Activated CD8-positive, alpha-beta T cell treated with anti-CD3 and anti-CD28 coated beads, Interleukin-2, amount 10 ng/mL, durations not matched to agents 7 days and 5 days (primary cell): ENCODE measurements at regions of chr12 and their contacts with region 1.

Region 1: GRCh38 chr12:64550755-64551154 is 59.5 kb upstream of the RASSF3 start:
- DNase-seq: no peak
- ATAC-seq: no peak
- H3K4me3 Mint-ChIP-seq: no peak overlapping the region
- H3K27ac Mint-ChIP-seq: no peak overlapping the region
- H3K4me1 Mint-ChIP-seq: peaks cover 6% of the 10 kb centered on the region
- H3K27me3 Mint-ChIP-seq: peaks cover 10% of the 10 kb centered on the region

Region 2: GRCh38 chr12:64538121-64538520 is 12.6 kb before region 1 on chr12:
- CTCF ChIA-PET with region 1: interaction called, 20 read pairs
- POLR2A ChIA-PET with region 1: no interaction called
- DNase-seq: no peak
- ATAC-seq: no peak
- H3K4me3 Mint-ChIP-seq: no peak overlapping the region
- H3K27ac Mint-ChIP-seq: no peak overlapping the region
- H3K4me1 Mint-ChIP-seq: no peaks in the 10 kb centered on the region
- H3K27me3 Mint-ChIP-seq: peaks cover 8% of the 10 kb centered on the region

Region 3: GRCh38 chr12:64669270-64669842 is 118.6 kb after region 1 on chr12:
- CTCF ChIA-PET with region 1: interaction called, 10 read pairs
- POLR2A ChIA-PET with region 1: no interaction called
- DNase-seq: peak; percentile 67
- ATAC-seq: peak; percentile 85
- H3K4me3 Mint-ChIP-seq: peak overlapping the region; percentile 87
- H3K27ac Mint-ChIP-seq: peak overlapping the region; percentile 98
- H3K4me1 Mint-ChIP-seq: peaks cover 91% of the 10 kb centered on the region
- H3K27me3 Mint-ChIP-seq: no peaks in the 10 kb centered on the region

Region 4: GRCh38 chr12:64696080-64696741 is 145.5 kb after region 1 on chr12:
- CTCF ChIA-PET with region 1: interaction called, 113 read pairs
- POLR2A ChIA-PET with region 1: interaction called, 9 read pairs
- DNase-seq: no peak
- ATAC-seq: no peak
- H3K4me3 Mint-ChIP-seq: no peak overlapping the region
- H3K27ac Mint-ChIP-seq: peak overlapping the region; percentile 36
- H3K4me1 Mint-ChIP-seq: peaks cover 64% of the 10 kb centered on the region
- H3K27me3 Mint-ChIP-seq: no peaks in the 10 kb centered on the region

Region 5: DNA sequence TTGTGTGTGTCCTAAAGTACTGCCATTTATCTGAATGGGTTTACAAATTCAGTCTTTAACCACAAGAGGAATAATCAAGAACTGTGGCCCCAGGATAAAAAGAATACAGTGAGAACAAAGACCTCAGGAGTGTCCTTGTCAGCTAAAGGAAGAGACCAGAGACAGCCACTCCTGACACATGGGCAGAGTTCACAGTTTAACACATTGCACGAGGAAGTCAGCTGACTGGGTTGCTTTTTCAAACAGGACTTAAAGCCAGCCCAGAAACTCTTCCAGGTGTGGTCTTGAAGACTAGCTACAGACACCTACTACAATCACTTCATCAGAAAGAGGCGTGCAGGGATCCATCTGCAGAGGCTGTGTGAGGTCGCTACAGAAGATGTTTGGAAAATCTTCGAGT is 165.6 kb after region 1 on chr12:
- CTCF ChIA-PET with region 1: interaction called, 18 read pairs
- POLR2A ChIA-PET with region 1: no interaction called
- DNase-seq: no peak
- ATAC-seq: no peak
- H3K4me3 Mint-ChIP-seq: no peak overlapping the region
- H3K27ac Mint-ChIP-seq: no peak overlapping the region
- H3K4me1 Mint-ChIP-seq: peaks cover 38% of the 10 kb centered on the region
- H3K27me3 Mint-ChIP-seq: no peaks in the 10 kb centered on the region

Region 6: GRCh38 chr12:64767495-64767894 is 216.7 kb after region 1 on chr12:
- CTCF ChIA-PET with region 1: no interaction called
- POLR2A ChIA-PET with region 1: no interaction called
- DNase-seq: no peak
- ATAC-seq: no peak
- H3K4me3 Mint-ChIP-seq: no peak overlapping the region
- H3K27ac Mint-ChIP-seq: no peak overlapping the region
- H3K4me1 Mint-ChIP-seq: no peaks in the 10 kb centered on the region
- H3K27me3 Mint-ChIP-seq: peaks cover 4% of the 10 kb centered on the region

Region 7: GRCh38 chr12:64796208-64796845 is 245.6 kb after region 1 on chr12:
- CTCF ChIA-PET with region 1: interaction called, 13 read pairs
- POLR2A ChIA-PET with region 1: no interaction called
- DNase-seq: peak; percentile 81
- ATAC-seq: peak; percentile 80
- H3K4me3 Mint-ChIP-seq: no peak overlapping the region
- H3K27ac Mint-ChIP-seq: no peak overlapping the region
- H3K4me1 Mint-ChIP-seq: no peaks in the 10 kb centered on the region
- H3K27me3 Mint-ChIP-seq: peaks cover 24% of the 10 kb centered on the region